Naive thymus-derived CD4-positive, alpha-beta T cell (primary cell): ENCODE measurements at regions of chr12 and their contacts with region 1.

Region 1: DNA sequence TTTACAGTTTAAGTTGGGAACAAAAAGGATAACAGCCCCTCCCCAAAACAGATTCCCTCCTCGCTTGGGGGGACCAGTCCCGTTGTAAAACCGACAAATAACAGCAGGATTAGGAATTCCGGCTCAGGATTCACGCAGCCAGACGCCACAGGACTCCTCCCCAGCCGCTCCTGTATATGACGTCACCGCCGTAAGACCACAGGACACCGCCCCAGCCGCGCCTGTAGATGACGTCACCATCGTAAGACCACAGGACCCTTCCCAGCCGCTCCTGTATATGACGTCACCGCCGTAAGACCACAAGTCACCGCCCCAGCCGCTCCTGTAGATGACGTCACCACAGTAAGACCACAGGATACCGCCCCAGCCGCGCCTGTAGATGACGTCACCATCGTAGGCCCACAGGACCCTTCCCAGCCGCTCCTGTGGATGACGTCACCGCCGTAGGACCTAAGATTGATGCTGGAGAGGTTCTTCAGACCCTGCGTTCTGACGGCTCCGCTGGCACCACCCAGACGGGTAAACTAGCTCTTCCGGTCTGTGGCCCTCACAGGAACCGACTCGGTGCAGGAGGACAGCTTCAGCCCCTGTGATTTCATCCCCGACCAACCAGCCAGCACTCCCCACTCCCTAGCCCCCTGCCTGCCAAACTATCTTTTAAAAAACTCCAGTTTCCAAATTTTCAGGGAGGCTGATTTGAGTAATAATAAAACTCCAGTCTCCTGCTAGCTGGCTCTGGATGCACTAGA is 43.9 kb upstream of the FBRSL1 start:
- DNase-seq: peak; percentile 34 to 76 (median 64)
- ATAC-seq: peak; percentile 72
- H3K4me3 ChIP-seq: peak overlapping the region; percentile 61
- H3K4me3 Mint-ChIP-seq: peak overlapping the region; percentile 66 to 97 (median 90)
- H3K27ac ChIP-seq: peak overlapping the region; percentile 99
- H3K27ac Mint-ChIP-seq: peak overlapping the region; percentile 98 to 100 (median 100)
- H3K4me1 ChIP-seq: peaks cover 18 to 47% of the 10 kb centered on the region in 2 donors
- H3K4me1 Mint-ChIP-seq: peaks cover 21 to 74% (median 46%) of the 10 kb centered on the region in 7 donors
- H3K27me3 ChIP-seq: no peaks in the 10 kb centered on the region
- H3K27me3 Mint-ChIP-seq: peaks cover 0 to 3% (median 0%) of the 10 kb centered on the region in 5 donors

Region 2: GRCh38 chr12:131710464-131711457 is 735.3 kb before region 1 on chr12 and contains the start of gene SFSWAP:
- CTCF ChIA-PET with region 1: no interaction called
- POLR2A ChIA-PET with region 1: no interaction called
- intact Hi-C with region 1: loop called in 1 of 2 experiments (anchors 2 kb)
- DNase-seq: peak; percentile 63 to 81 (median 79)
- ATAC-seq: peak; percentile 92
- H3K4me3 ChIP-seq: peak within 1 kb of the TSS; percentile 84
- H3K4me3 Mint-ChIP-seq: peak within 1 kb of the TSS; percentile 93 to 99 (median 96)
- H3K27ac ChIP-seq: peak within 1 kb of the TSS; percentile 87
- H3K27ac Mint-ChIP-seq: peak within 1 kb of the TSS; percentile 90 to 99 (median 97)
- H3K4me1 ChIP-seq: peaks cover 18 to 19% of the 10 kb centered on the region in 2 donors
- H3K4me1 Mint-ChIP-seq: peaks cover 15 to 40% (median 28%) of the 10 kb centered on the region in 7 donors
- H3K27me3 ChIP-seq: no peaks in the 10 kb centered on the region
- H3K27me3 Mint-ChIP-seq: no peaks in the 10 kb centered on the region
- total RNA-seq, gene SFSWAP: 65.6 to 120 (median 98.4) TPM

Region 3: DNA sequence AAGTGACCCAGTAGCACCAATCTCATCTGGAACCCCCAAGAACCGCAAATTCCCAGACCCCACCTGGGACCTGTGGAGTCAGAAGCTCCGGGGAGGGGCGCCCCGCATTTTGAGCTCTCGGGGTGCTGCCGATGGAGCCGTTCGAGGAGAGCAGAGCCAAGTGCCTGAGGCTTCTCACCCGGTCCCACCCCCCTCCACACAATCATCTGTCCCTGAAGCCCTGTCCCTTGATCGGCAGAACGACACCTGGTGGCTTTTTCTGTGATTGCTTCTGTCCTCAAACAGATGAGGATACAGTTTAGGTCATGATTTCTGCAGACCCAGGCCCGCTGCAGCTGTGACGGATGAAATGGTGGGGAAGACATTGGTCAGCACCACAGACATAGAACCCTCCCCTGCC is 227.1 kb before region 1 on chr12:
- CTCF ChIA-PET with region 1: no interaction called
- POLR2A ChIA-PET with region 1: no interaction called
- intact Hi-C with region 1: no loop called
- DNase-seq: peak in 7 of 9 donors; percentile 40 to 67 (median 57)
- ATAC-seq: peak; percentile 66
- H3K4me3 ChIP-seq: no peak overlapping the region
- H3K4me3 Mint-ChIP-seq: no peak overlapping the region
- H3K27ac ChIP-seq: no peak overlapping the region
- H3K27ac Mint-ChIP-seq: peak overlapping the region in 3 of 9 donors; percentile 4 to 55 (median 38)
- H3K4me1 ChIP-seq: peaks cover 6 to 10% of the 10 kb centered on the region in 2 donors
- H3K4me1 Mint-ChIP-seq: peaks cover 8 to 24% (median 13%) of the 10 kb centered on the region in 7 donors
- H3K27me3 ChIP-seq: no peaks in the 10 kb centered on the region
- H3K27me3 Mint-ChIP-seq: peaks cover 0 to 12% (median 8%) of the 10 kb centered on the region in 5 donors

Region 4: DNA sequence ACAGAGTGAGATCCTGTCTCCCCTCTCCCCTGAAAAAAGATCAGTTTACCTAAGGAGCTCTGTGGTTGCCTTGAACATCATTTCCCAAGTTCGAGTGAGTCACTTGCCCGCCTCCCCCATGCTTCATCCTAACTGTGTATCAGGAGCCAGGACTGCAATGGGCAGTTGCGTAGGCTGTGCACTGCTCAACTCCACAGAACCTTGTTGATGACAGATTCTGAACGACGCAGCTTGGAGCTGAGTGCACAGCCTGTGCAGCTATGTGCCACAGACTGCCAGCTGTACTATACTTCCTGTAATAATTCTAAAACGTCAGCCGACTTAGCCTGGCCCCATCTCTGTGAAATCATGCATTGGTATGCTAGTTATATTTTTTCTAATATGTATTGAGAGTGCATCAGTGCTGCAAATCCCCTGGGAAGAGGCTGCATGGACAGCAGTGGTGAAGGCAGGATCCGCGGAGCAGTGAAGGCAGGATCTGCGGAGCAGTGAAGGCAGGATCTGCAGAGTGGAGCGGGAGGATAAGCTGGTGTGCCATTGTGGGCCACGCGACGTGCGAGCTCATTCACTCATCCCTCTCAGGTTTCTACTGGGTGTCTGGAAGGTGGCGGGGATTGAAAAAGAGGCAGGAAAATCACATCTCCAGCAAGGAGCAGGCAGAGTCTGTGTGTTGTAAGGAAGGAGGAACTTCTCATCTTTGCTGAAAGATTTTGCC is 197.4 kb before region 1 on chr12:
- CTCF ChIA-PET with region 1: no interaction called
- POLR2A ChIA-PET with region 1: no interaction called
- intact Hi-C with region 1: no loop called
- DNase-seq: no peak
- ATAC-seq: no peak
- H3K4me3 ChIP-seq: no peak overlapping the region
- H3K4me3 Mint-ChIP-seq: no peak overlapping the region
- H3K27ac ChIP-seq: no peak overlapping the region
- H3K27ac Mint-ChIP-seq: no peak overlapping the region
- H3K4me1 ChIP-seq: no peaks in the 10 kb centered on the region
- H3K4me1 Mint-ChIP-seq: peaks cover 0 to 5% (median 2%) of the 10 kb centered on the region in 7 donors
- H3K27me3 ChIP-seq: no peaks in the 10 kb centered on the region
- H3K27me3 Mint-ChIP-seq: peaks cover 0 to 8% (median 0%) of the 10 kb centered on the region in 5 donors

Region 5: DNA sequence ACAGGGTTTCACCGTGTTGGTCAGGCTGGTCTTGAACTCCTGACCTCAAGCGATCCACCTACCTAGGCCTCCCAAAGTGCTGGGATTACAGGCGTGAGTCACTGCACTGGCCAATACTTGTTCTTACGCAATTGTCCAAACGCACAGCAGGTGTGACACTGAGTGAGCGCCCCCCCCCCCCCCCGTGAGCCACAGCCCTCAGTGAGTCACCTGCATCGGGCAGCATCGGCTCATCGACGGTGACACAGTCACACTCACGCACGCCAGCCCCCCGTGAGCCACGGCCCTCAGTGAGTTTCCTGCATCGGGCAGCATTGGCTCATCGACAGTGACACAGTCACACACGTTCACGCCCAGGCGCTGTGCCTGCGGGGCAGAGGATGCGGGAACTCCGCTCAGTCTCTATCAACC is 159.2 kb before region 1 on chr12:
- CTCF ChIA-PET with region 1: no interaction called
- POLR2A ChIA-PET with region 1: no interaction called
- intact Hi-C with region 1: no loop called
- DNase-seq: no peak
- ATAC-seq: no peak
- H3K4me3 ChIP-seq: no peak overlapping the region
- H3K4me3 Mint-ChIP-seq: peak overlapping the region in 1 of 10 donors; percentile 30
- H3K27ac ChIP-seq: no peak overlapping the region
- H3K27ac Mint-ChIP-seq: no peak overlapping the region
- H3K4me1 ChIP-seq: peaks cover 7 to 18% of the 10 kb centered on the region in 2 donors
- H3K4me1 Mint-ChIP-seq: peaks cover 0 to 27% (median 12%) of the 10 kb centered on the region in 7 donors
- H3K27me3 ChIP-seq: no peaks in the 10 kb centered on the region
- H3K27me3 Mint-ChIP-seq: peaks cover 15 to 31% (median 18%) of the 10 kb centered on the region in 5 donors

Region 6: GRCh38 chr12:132429946-132430643 is 16.0 kb before region 1 on chr12:
- CTCF ChIA-PET with region 1: interaction called, 5 read pairs
- POLR2A ChIA-PET with region 1: interaction called, 5 read pairs
- intact Hi-C with region 1: loop called in 1 of 2 experiments (anchors 2 kb)
- DNase-seq: peak; percentile 49 to 71 (median 65)
- ATAC-seq: peak; percentile 93
- H3K4me3 ChIP-seq: peak overlapping the region; percentile 48
- H3K4me3 Mint-ChIP-seq: peak overlapping the region; percentile 42 to 81 (median 77)
- H3K27ac ChIP-seq: no peak overlapping the region
- H3K27ac Mint-ChIP-seq: peak overlapping the region in 8 of 9 donors; percentile 17 to 83 (median 76)
- H3K4me1 ChIP-seq: peaks cover 11 to 33% of the 10 kb centered on the region in 2 donors
- H3K4me1 Mint-ChIP-seq: peaks cover 17 to 44% (median 34%) of the 10 kb centered on the region in 7 donors
- H3K27me3 ChIP-seq: no peaks in the 10 kb centered on the region
- H3K27me3 Mint-ChIP-seq: peaks cover 0 to 6% (median 0%) of the 10 kb centered on the region in 5 donors

Region 7: GRCh38 chr12:132469423-132469822 is 23.4 kb after region 1 on chr12:
- CTCF ChIA-PET with region 1: no interaction called
- POLR2A ChIA-PET with region 1: interaction called, 6 read pairs
- intact Hi-C with region 1: loop called (anchors 1 to 2 kb)
- DNase-seq: peak in 1 of 9 donors; percentile 40
- ATAC-seq: peak; percentile 25
- H3K4me3 ChIP-seq: no peak overlapping the region
- H3K4me3 Mint-ChIP-seq: peak overlapping the region; percentile 34 to 93 (median 78)
- H3K27ac ChIP-seq: peak overlapping the region; percentile 33
- H3K27ac Mint-ChIP-seq: peak overlapping the region in 8 of 9 donors; percentile 57 to 91 (median 82)
- H3K4me1 ChIP-seq: peaks cover 8 to 21% of the 10 kb centered on the region in 2 donors
- H3K4me1 Mint-ChIP-seq: peaks cover 20 to 61% (median 40%) of the 10 kb centered on the region in 7 donors
- H3K27me3 ChIP-seq: peaks cover 0 to 6% of the 10 kb centered on the region in 2 donors
- H3K27me3 Mint-ChIP-seq: peaks cover 0 to 25% (median 0%) of the 10 kb centered on the region in 5 donors

Region 8: DNA sequence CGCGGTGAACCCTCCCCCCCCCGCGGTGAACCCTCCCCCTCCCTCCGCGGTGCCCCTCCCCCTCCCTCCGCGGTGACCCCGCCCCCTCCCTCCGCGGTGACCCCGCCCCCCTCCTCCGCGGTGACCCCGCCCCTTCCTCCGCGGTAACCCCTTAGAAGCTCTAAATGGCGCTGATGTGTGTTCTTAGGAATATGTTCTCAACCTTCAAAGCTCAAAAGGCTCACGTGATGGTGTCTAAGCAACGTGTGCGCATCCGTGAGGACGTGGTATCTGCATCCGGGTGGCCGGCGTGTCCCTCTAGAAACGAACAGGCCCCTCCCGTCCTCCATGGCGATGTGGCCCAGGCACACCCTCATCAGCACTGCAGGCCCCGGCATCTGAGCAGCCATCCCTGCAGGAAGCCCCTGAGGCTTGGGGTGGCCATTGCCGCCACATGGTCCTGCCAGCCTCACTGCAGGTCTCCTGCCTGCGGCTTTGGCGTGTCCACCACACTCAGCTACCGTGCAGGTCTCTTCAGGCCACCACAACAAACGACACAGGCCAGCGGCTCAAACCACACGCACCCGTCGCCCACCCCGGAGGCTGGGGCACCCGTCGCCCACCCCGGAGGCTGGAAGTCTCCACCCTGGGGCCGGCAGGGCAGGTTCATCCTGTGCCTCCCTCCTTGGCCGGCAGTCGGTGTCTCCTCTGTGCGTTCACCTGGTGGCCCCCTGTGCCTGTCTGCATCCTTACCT is 29.4 kb after region 1 on chr12:
- CTCF ChIA-PET with region 1: no interaction called
- POLR2A ChIA-PET with region 1: interaction called, 4 read pairs
- intact Hi-C with region 1: loop called in 1 of 2 experiments (anchors 1 kb)
- DNase-seq: peak in 5 of 9 donors; percentile 42 to 69 (median 46)
- ATAC-seq: peak; percentile 55
- H3K4me3 ChIP-seq: peak overlapping the region; percentile 24
- H3K4me3 Mint-ChIP-seq: peak overlapping the region; percentile 44 to 77 (median 70)
- H3K27ac ChIP-seq: no peak overlapping the region
- H3K27ac Mint-ChIP-seq: peak overlapping the region in 8 of 9 donors; percentile 61 to 93 (median 86)
- H3K4me1 ChIP-seq: peaks cover 11 to 26% of the 10 kb centered on the region in 2 donors
- H3K4me1 Mint-ChIP-seq: peaks cover 29 to 54% (median 33%) of the 10 kb centered on the region in 7 donors
- H3K27me3 ChIP-seq: no peaks in the 10 kb centered on the region
- H3K27me3 Mint-ChIP-seq: peaks cover 0 to 12% (median 0%) of the 10 kb centered on the region in 5 donors